Aorta (tissue), 5 donors: ENCODE measurements at regions of chr19 and their contacts with region 1.

Region 1: GRCh38 chr19:17996826-17997316 is 11.1 kb upstream of the ARRDC2 start:
- DNase-seq: peak; percentile 91 to 96
- ATAC-seq: peak; percentile 88
- H3K4me3 ChIP-seq: no peak overlapping the region
- H3K27ac ChIP-seq: no peak overlapping the region
- H3K4me1 ChIP-seq: no peaks in the 10 kb centered on the region
- H3K27me3 ChIP-seq: no peaks in the 10 kb centered on the region

Region 2: DNA sequence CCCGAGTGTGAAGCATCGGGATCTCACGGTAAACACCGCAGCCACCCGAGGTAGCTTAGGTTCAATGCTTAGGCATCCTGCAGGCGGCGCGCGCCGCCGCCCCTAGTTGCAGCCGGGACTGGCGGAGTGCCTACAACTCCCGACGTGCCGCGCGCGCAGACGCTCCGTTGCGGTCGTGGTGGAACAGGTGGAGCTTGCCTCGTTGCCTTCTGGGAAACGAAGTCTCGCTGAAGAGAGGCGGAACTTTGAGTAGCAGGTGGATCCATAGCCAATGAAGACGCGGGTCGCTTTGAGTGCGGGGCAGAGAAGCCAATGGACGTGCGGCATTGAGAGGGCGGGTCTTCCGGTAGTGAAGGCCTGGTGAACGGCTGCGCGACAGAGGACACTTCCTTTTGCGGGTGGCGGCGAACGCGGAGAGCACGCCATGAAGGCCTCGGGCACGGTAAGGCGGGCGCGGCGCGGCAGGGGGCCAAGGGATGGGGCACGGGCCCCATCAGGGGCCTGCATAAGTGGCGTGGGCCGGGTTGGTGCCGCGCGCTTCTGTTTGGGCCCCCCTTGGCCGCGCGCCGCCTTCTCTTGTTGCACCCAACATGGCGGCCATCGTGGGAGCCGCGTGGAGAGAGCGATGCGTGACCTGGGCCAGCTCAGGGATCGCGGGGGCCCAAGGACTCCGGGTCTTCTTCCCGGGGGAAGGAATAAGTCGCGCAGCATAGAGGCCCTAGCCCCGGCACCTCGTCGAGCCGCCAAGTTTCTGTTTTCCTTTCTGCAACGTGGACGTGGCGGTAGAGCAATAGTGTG is 137.1 kb before region 1 on chr19 and contains the start of gene RPL18A:
- intact Hi-C with region 1: loop called (anchors 2 to 5 kb)
- DNase-seq: peak; percentile 99
- ATAC-seq: peak; percentile 98
- H3K4me3 ChIP-seq: peak within 1 kb of the TSS; percentile 31 to 83
- H3K27ac ChIP-seq: peak within 1 kb of the TSS in 1 of 2 donors; percentile 2
- H3K4me1 ChIP-seq: peaks cover 2 to 6% of the 10 kb centered on the region in 2 donors
- H3K27me3 ChIP-seq: no peaks in the 10 kb centered on the region
- total RNA-seq, gene RPL18A: 1,221 to 1,276 TPM

Region 3: GRCh38 chr19:17938092-17938845 is 58.6 kb before region 1 on chr19:
- intact Hi-C with region 1: loop called (anchors 1 to 2 kb)
- DNase-seq: peak; percentile 86 to 93
- ATAC-seq: peak; percentile 90
- H3K4me3 ChIP-seq: no peak overlapping the region
- H3K27ac ChIP-seq: no peak overlapping the region
- H3K4me1 ChIP-seq: no peaks in the 10 kb centered on the region
- H3K27me3 ChIP-seq: no peaks in the 10 kb centered on the region

Region 4: GRCh38 chr19:17947815-17948513 is 48.9 kb before region 1 on chr19:
- intact Hi-C with region 1: loop called in 1 of 2 experiments (anchors 2 kb)
- DNase-seq: peak; percentile 94 to 96
- ATAC-seq: peak; percentile 92
- H3K4me3 ChIP-seq: peak overlapping the region; percentile 65 to 86
- H3K27ac ChIP-seq: no peak overlapping the region
- H3K4me1 ChIP-seq: no peaks in the 10 kb centered on the region
- H3K27me3 ChIP-seq: no peaks in the 10 kb centered on the region